ENCODE measurements at regions of chr18 and their contacts with region 1.

Region 1: DNA sequence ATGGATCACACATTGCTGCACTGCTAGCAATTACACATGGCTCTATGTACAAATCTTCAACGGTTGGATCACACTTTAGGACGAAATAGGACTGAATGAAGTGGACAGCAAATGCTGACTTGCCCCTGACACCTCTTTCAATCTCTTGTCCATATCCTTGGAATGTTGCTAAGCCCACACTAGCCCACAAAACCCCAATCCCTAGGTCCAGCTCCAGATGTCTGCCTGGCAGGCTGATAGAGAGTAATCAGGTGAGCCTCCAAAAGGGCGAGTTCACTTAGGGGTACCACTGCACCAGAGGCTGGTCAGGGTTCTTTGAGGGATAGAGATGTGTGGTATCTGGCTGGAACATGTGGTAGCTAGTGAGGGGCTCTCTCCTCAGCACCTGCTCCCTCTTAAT is 18.5 kb upstream of the FHOD3 start:
- DNase-seq: no peak
- CTCF ChIP-seq: no peak

Region 2: DNA sequence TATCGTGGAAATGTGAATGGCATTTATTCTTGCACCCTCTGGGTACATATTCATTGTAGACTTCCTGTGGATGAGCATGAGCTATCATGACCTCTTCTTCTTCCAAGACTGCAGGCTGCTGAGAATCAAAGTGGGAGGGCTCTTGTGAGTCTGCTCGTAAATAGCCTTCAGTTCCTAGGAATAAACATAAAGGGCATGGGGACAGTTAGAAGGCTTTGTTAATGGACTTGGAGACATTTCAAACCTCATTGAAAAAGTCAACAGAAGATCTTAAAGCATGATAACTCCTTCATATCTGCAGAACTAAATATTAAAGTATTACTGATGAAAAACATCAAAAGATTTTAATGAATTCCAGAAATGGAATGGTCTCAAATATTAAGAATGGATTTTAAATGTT is 164.7 kb before region 1 on chr18:
- CTCF ChIA-PET with region 1: no interaction called
- POLR2A ChIA-PET with region 1: no interaction called
- DNase-seq: no peak
- CTCF ChIP-seq: no peak

Region 3: DNA sequence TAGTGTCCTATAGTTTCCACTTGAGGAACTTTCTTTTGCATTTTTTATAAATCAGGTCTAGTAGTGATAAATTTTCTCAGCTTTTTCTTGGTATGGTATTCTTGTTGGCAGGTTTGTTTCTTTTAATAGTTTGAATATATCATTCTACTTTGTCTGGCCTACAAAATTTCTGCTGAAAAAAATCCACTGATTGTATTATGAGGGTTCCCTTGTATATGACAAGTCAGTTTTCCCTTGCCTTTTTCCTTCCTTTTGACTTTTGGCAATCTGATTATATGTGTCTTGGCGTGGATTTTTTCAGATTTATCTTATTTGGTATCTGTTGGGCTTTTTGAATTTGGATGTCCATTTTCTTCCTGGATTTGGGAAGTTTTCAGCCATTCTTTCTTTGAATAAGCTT is 49.8 kb before region 1 on chr18:
- CTCF ChIA-PET with region 1: no interaction called
- POLR2A ChIA-PET with region 1: no interaction called
- DNase-seq: no peak
- CTCF ChIP-seq: no peak

Region 4: DNA sequence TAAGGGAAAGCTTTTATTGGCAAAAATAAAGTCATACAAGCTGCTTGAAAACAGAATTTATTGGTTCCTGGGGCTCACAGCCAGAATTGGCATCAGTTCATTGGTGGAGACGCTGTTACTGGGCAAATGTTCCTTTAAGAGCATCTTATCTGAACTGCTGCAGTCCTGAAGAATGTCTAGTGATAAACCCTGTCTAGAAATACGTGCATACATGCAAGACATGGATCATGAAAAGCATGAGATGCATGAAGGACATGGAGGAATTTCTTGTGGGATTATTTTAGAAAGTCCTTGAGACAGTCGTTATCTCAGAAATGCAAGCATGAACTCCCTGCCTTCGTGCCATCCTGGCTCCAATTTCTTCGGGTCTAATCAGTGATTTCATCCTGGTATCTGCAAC is 14.0 kb before region 1 on chr18:
- CTCF ChIA-PET with region 1: interaction called, 14 read pairs
- POLR2A ChIA-PET with region 1: no interaction called
- DNase-seq: no peak
- CTCF ChIP-seq: no peak

Region 5: DNA sequence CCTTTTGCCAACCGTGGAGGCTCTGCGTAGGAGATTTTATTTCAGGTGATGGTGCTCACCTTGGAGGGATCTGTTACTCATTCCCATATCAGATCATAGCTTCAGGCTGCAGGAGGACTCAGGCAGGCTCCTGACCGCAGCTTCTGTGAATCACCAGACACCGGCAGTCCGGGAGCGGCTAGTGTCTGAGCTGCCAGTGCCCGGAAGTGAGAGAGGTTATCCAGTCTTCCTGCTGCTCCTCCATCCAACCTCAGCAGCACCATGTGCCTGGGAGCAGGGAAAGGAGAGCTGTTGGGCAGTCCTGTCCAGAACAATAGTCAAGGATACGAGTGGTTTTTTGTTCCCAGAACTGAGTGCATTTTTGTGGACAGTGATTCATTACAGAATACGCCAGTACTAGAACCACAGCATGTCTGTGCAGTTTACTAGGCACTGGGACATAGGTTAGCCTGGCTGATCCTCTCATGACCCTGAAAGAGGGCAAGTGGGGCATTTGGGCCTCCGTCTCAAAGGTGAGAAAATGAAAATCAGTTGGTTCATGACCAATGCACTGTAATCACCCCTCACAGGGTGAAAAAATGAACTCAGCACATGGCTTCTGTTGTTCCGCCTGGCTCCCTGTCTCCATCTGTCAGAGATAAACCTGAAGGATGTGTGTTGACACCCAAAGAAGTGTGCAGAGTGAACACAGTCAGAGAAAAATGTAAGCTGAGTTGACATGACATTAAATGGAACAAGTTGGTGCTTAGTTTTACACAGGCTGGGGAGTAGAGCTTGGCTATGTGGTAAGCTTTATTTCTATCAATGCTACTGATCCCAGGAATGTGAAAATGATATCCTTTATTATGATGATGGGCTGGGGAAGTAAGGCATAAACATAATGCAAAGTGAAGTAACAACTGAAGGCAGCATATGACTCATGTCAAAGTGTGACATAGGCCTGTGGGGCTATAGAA is 30.7 kb after region 1 on chr18:
- CTCF ChIA-PET with region 1: no interaction called
- POLR2A ChIA-PET with region 1: no interaction called
- DNase-seq: no peak
- CTCF ChIP-seq: no peak

Region 6: GRCh38 chr18:36493349-36494159 is 214.6 kb after region 1 on chr18:
- CTCF ChIA-PET with region 1: no interaction called
- POLR2A ChIA-PET with region 1: no interaction called
- DNase-seq: no peak
- CTCF ChIP-seq: no peak

Measured in GM10248 (cell line).